SK-N-SH (cell line): ENCODE measurements at regions of chr2 and their contacts with region 1.

Region 1: DNA sequence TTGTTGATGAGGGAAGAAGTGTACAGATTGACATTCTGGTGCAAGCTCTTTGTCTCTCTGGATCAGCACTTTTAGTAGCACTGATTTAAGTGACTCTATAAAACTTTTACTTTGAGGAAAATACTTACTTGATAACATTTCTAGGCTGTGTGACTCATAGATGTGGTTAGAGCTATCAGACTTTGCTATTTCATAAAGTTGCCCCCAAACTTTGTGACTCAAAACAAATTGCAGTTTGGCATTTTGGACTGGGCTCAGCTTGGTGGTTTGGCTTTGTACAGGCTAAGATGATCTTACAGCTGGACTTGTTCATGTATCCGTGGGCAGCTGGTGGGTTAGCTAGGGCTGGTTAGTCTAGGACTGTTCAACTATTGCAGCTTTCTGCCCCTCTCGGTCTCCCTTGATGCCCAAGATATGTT is 42.1 kb upstream of the GLS start:
- DNase-seq: no peak
- H3K4me3 ChIP-seq: no peak overlapping the region
- H3K27ac ChIP-seq: peak overlapping the region; percentile 89 to 93; a peak in 3 of 4 replicates
- H3K4me1 ChIP-seq: peaks cover 2 to 47% of the 10 kb centered on the region in 2 experiments
- H3K27me3 ChIP-seq: no peaks in the 10 kb centered on the region
- CTCF ChIP-seq: no peak
- EP300 ChIP-seq: peak in 1 of 2 experiments; percentile 98; a peak in 2 of 4 replicates
- RAD21 ChIP-seq: no peak

Region 2: DNA sequence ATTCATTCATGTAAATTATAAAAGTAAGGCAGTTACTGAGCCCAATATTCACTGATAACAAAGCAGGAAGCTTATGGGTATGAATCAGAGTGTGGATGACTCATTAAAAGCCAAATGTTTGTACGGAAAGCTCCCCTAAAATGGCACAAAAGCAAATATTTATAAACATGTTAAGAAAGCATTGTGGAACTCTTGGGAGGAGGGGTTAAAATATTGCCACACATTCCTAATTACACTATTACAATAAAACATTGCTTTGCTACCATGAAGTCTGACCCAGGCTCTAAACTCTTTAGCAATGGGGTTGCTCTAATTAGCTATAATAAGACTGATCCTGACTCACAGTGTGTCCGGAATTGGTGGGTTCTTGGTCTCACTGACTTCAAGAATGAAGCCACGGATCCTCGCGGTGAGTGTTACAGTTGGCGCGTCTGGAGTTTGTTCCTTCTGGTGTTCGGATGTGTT is 78.7 kb before region 1 on chr2:
- CTCF ChIA-PET with region 1: no interaction called
- POLR2A ChIA-PET with region 1: no interaction called
- DNase-seq: no peak
- H3K4me3 ChIP-seq: no peak overlapping the region
- H3K27ac ChIP-seq: no peak overlapping the region
- H3K4me1 ChIP-seq: no peaks in the 10 kb centered on the region
- H3K27me3 ChIP-seq: no peaks in the 10 kb centered on the region
- CTCF ChIP-seq: no peak
- EP300 ChIP-seq: no peak
- RAD21 ChIP-seq: no peak

Region 3: GRCh38 chr2:190812506-190813294 is 25.8 kb before region 1 on chr2:
- CTCF ChIA-PET with region 1: no interaction called
- POLR2A ChIA-PET with region 1: no interaction called
- DNase-seq: no peak
- H3K4me3 ChIP-seq: no peak overlapping the region
- H3K27ac ChIP-seq: peak overlapping the region in 1 of 2 experiments; percentile 39; a peak in 1 of 4 replicates
- H3K4me1 ChIP-seq: peaks cover 0 to 14% of the 10 kb centered on the region in 2 experiments; a peak in 2 of 4 replicates
- H3K27me3 ChIP-seq: no peaks in the 10 kb centered on the region
- CTCF ChIP-seq: no peak
- EP300 ChIP-seq: no peak
- RAD21 ChIP-seq: no peak

Region 4: DNA sequence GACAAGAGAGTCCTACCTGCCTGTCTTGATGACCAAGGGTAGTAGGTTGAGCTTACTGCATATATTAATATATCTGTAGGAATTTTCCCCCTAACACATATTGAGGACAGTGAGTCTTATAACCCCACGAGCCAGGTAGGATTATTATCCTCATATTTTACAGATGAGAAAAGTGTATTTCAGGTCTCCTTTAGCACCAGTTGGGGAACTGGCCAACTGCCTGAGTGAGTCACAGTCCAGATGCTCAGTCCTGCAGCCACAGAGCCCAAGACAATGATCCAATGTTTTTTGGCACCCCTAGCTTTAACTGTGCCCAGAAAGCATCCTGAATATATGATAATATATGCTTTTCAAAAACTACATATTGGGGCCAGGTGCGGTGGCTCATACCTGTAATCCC is 11.3 kb after region 1 on chr2:
- CTCF ChIA-PET with region 1: interaction called, 28 read pairs
- POLR2A ChIA-PET with region 1: interaction called, 4 read pairs
- DNase-seq: no peak
- H3K4me3 ChIP-seq: no peak overlapping the region
- H3K27ac ChIP-seq: peak overlapping the region in 1 of 2 experiments; percentile 51; a peak in 3 of 4 replicates
- H3K4me1 ChIP-seq: peaks cover 0 to 27% of the 10 kb centered on the region in 2 experiments; a peak in 3 of 4 replicates
- H3K27me3 ChIP-seq: no peaks in the 10 kb centered on the region
- CTCF ChIP-seq: no peak
- EP300 ChIP-seq: peak in 1 of 2 experiments; percentile 93; a peak in 2 of 4 replicates
- RAD21 ChIP-seq: no peak

Region 5: GRCh38 chr2:190863946-190864345 is 25.4 kb after region 1 on chr2:
- CTCF ChIA-PET with region 1: no interaction called
- POLR2A ChIA-PET with region 1: no interaction called
- DNase-seq: no peak
- H3K4me3 ChIP-seq: no peak overlapping the region
- H3K27ac ChIP-seq: peak overlapping the region in 1 of 2 experiments; percentile 53; a peak in 2 of 4 replicates
- H3K4me1 ChIP-seq: peaks cover 10 to 41% of the 10 kb centered on the region in 2 experiments
- H3K27me3 ChIP-seq: no peaks in the 10 kb centered on the region
- CTCF ChIP-seq: no peak
- EP300 ChIP-seq: no peak
- RAD21 ChIP-seq: no peak